Astrocyte of the spinal cord (primary cell): ENCODE measurements at regions of chr11 and their contacts with region 1.

Region 1: DNA sequence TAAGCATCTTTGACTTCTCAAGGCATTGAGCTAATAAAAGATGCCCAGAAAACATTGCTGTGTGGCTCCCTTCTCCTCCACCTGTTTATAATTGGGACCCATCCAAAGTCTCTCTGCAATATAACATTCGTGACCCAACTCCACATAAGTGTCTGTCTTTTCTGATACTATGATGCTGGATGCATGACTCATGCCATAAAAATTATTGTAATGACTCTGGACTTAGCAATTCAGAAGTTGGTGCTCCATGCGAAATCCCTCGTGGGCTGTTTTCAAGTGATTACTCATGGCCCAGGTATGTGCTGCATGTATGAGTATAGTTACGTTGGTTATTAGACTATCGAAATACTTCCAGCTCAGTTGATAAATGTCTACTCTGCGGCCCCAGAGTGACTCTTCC is 11.7 kb downstream of the FJX1 start:
- DNase-seq: peak; percentile 97
- H3K4me3 ChIP-seq: no peak overlapping the region
- CTCF ChIP-seq: no peak

Region 2: GRCh38 chr11:35485656-35486322 is 144.1 kb before region 1 on chr11:
- in situ Hi-C with region 1: no loop called
- DNase-seq: peak; percentile 80
- H3K4me3 ChIP-seq: no peak overlapping the region
- CTCF ChIP-seq: peak; percentile 91

Region 3: DNA sequence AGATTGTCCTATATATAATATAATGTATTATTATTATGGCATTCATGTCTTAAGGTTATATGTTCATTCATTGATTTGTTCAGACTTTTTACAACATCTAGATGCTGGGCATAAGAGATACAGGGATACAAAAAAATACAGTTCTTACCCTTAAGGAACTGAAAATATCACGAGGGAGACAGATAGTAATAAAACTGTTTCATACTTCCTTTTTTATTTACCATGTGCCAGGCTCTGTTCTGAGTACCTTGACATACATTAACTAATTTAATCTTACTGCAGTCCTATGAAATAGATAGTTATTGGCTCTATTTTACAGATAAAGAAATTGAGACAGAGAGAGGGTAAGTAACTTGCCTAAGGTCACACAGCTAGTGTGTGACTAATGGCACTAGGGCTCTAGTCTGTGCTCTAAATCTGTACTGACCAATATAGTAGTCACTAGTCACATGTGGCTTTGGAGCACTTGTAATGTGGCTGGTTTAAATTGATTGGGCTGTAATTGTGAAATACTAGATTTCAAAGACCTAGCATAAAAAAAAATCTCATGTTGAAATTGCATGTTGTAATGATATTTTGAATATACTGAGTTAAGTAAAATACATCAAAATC is 53.9 kb after region 1 on chr11:
- in situ Hi-C with region 1: no loop called
- DNase-seq: no peak
- H3K4me3 ChIP-seq: no peak overlapping the region
- CTCF ChIP-seq: no peak

Region 4: DNA sequence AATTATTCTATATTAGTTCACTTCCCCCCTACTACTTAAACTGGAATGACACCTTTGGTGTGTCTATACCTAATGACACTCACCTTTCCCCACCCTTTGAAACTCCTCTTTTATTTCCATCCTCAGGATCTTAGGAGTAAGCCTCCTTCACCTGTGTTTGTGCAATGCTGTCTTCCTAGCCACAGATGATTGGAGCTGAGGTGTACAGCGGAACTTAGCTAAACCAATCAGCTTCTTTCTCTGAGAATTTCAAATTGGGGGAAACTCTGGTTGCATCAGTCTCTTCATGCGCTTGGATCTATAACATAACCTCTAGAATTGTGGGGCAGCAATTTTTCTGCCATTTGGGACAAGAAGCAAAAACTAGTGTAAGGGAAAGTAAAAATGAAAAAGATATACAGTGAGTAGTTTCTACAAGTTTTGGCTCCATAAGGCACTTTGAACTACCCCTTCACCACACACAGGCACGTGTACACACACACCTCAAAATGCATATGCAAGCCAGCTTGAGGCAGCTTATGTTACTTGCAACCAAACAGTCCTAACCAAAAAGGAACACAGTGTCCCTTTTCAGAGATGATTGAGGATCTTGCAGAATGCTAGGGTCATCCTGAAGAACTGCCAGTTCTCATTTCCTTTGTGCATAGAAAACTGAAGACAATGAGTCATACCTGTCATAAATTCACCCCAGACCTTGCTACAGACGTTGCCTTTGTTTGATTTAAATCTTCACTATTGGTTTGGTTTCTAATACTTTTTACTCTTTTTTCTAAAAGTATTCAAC is 277.9 kb after region 1 on chr11:
- in situ Hi-C with region 1: loop called (anchors 25 kb)
- DNase-seq: peak; percentile 92
- H3K4me3 ChIP-seq: no peak overlapping the region
- CTCF ChIP-seq: no peak

Region 5: DNA sequence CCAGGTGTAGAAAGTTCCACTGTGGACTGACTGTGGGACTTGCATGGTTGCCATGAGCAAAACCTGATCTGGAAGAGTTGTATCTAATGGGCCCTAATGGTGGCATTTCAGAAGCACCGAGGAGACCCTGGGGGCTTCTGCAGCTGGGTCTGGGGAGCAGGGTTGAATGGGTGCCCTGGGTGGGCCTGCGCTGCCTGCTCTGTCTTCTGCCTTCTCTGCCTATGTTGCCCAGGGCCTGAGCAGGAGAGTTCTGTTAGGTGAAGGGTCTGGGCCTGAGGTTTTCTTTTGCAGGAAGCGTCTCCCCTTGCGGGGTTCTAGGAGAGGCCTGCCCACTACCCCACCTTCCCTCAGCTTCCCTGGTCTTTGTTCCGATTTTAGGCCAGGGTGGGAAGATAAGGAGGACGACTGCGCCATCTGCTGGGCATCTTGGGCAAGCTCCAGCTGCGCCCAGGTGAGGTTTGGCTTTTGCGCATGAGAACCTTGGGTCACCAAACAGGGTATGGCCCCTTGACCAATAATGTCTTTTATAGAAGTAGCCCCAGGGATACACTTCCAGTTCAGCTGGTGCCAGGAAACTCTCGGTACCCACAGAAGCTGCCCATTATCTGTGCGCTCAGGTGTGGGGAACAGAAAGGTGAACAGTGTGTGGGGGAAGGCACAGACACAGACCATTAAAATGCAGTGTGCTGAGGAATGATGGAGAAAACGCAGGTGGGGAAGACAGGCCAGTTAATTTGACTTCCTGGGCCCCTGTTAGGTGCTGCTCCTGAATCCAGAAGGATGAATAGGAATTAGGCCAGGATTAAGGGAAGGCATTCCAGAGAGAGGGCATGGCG is 636.1 kb after region 1 on chr11:
- in situ Hi-C with region 1: loop called (anchors 25 kb)
- DNase-seq: peak; percentile 34
- H3K4me3 ChIP-seq: no peak overlapping the region
- CTCF ChIP-seq: peak; percentile 84